ENCODE measurements at regions of chr14 and their contacts with region 1.

Region 1: DNA sequence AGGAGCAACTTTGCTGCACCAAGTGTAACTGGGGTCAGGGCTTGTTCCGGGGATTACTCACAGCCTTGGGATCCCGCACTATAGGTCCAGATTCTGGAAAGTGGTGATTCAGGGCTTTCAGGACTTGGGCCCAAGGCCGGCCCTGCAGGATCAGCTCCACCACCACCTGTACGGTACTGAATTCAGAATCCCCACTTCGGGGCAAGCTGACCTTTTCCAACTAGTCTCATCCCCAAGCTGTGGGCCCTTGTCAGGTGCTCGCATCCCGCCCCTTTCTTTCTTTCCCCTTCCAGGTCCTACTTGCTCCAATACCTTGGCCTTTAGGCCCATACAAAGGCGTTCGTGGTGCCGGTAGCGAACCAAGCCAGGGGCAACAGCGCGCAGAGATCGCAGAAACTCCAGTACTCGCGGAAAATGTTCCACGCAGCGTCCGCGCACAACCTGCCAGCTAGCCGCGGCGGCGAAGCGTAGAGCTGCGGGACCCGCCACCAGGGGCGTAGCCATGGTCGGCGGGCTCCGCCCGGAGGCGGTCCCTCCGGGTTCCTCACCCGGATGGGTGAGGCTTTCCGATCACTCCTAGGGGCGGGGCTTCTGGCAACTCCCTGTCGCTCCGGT is 487 bp downstream of the TINF2 start:
- DNase-seq: no peak
- H3K4me3 ChIP-seq: peak overlapping the region; percentile 91
- CTCF ChIP-seq: peak; percentile 65

Region 2: DNA sequence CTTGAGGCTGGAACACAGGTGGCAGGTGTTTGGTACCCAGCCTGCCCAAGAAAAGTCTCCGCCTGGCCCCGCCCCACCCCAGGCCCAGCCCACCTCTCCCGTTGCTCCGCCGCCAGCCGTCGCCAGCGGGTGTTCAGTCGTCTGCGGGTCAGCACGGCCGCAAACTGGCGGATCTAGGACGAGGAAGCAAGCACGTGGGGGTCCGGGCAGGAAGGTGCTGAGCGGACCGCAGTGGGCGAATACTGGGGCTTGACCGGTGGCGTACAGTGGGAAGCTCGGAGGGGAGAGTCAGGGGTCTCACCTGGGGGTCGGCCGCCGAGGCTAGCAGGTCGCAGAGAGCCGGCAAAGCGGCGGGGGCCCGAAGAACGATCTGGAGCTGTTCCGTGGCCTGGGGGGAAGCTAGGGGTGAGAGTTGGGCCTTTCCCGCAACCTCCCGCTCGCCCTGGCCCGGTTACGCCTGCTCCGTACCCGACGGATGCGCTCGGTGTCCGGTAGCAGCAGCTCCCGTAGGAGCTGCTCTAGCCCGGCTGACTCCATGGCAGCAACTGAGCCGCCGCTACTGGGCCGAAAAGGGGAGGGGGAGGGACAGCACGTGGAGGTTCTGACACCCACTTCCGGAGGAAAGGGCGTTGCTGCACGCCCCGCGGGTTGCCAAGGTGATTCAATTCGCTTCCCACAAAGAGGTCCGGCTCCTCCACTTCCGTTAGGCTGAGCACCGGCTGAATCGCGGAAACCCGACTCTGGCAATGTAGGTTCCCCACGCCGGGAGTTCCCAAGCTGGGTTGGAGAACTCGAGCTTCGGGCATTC is 53.5 kb before region 1 on chr14 and contains the start of gene IPO4:
- CTCF ChIA-PET with region 1: interaction called, 3 read pairs
- POLR2A ChIA-PET with region 1: interaction called, 10 read pairs
- DNase-seq: peak; percentile 90
- H3K4me3 ChIP-seq: peak within 1 kb of the TSS; percentile 84
- CTCF ChIP-seq: no peak

Region 3: GRCh38 chr14:24215495-24216344 is 26.2 kb before region 1 on chr14 and contains the start of gene MDP1:
- CTCF ChIA-PET with region 1: interaction called, 18 read pairs
- POLR2A ChIA-PET with region 1: interaction called, 16 read pairs
- DNase-seq: peak; percentile 33
- H3K4me3 ChIP-seq: peak within 1 kb of the TSS; percentile 90
- CTCF ChIP-seq: peak; percentile 70

Region 4: GRCh38 chr14:24271134-24271833 is 29.3 kb after region 1 on chr14 and contains the start of gene RABGGTA:
- CTCF ChIA-PET with region 1: interaction called, 155 read pairs
- POLR2A ChIA-PET with region 1: interaction called, 27 read pairs
- DNase-seq: no peak
- H3K4me3 ChIP-seq: peak within 1 kb of the TSS; percentile 98
- CTCF ChIP-seq: peak; percentile 97

Region 5: GRCh38 chr14:24289649-24290249 is 47.8 kb after region 1 on chr14:
- CTCF ChIA-PET with region 1: interaction called, 315 read pairs
- POLR2A ChIA-PET with region 1: interaction called, 3 read pairs
- DNase-seq: no peak
- H3K4me3 ChIP-seq: no peak overlapping the region
- CTCF ChIP-seq: no peak